G401 (cell line): ENCODE measurements at regions of chr1 and their contacts with region 1.

Region 1: DNA sequence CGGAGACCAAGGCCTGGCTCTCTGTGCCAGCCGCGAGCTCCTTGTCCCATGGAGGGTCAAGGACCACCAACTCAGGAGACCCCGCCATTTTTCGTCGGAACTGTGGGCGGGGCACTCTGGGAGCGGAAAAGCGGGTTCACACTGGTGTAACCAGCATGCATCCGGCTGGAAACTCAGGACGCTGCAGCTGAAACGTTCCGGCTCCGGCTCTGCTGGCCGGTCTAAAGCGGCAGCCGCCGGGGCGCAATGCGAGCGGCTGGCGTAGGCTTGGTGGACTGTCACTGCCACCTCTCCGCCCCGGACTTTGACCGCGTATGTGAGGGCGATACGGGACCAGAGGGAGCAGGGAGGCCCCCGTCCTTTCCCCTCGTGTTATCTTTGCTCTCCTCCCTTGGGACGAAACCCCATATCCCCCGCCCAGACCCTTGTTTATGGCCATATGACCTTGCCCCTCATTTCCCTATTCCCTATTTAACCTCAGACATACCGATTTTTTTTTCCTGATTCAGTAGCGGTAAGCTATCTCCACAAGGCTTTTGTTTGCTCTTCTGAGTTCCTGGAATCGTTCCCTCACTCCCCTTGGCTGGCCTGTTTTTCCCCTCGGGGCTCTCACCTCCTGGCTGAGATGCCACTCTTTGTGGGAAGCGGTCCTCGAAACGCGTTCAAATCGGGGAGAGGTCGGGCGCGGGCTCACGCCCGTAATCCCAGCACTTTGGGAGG is at the starts of genes NSL1 and TATDN3:
- DNase-seq: peak; percentile 89
- total RNA-seq, gene NSL1: 74.3 and 107 TPM in 2 replicates
- total RNA-seq, gene TATDN3: 12.2 and 15.1 TPM in 2 replicates

Region 2: DNA sequence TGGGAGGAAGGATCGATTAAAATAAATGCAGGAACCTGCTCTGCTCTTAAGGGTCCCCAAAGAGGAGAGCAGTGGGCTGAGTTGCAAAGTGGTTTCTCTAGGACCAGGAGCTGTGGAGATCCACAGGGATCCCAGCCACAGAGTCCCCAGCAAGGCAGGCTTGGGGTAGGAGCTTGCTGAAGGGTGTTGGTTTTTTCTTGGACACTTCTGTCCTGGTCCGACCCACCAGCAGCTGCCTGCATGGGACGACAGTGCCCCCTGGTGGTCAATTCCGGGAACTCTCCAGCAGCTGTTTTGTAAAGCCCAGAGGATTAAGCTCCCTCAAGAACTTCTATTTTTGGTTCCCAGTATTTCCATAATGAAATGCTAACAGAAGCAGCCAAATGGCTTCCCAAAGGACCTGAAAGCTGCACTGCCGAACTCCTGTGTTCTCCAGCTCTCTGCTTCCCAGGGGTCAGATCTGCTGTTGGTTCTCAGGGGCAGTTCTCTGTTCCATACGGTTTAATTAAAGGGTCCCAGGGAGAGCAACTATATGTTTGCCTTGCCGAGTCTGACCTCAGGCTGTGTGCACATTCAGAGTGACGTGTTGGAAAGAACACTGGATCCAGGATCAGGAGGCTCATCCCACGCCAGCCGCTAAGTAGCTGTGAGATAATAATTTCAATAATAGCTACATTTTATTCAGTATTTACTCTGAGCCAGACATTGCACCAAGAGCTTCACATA is 335.9 kb before region 1 on chr1:
- in situ Hi-C with region 1: loop called (anchors 25 kb)
- DNase-seq: peak; percentile 82

Region 3: GRCh38 chr1:212938846-212939245 is 147.0 kb after region 1 on chr1:
- in situ Hi-C with region 1: no loop called
- DNase-seq: no peak